ENCODE measurements at regions of chrX and their contacts with region 1.

Region 1: GRCh38 chrX:120514236-120514635 is 45.1 kb upstream of the LAMP2 start:
- DNase-seq: peak; percentile 47
- H3K4me3 Mint-ChIP-seq: no peak overlapping the region
- H3K27ac Mint-ChIP-seq: no peak overlapping the region
- H3K4me1 Mint-ChIP-seq: peaks cover 6% of the 10 kb centered on the region
- H3K27me3 Mint-ChIP-seq: peaks cover 18% of the 10 kb centered on the region
- CTCF ChIP-seq: peak; percentile 40

Region 2: DNA sequence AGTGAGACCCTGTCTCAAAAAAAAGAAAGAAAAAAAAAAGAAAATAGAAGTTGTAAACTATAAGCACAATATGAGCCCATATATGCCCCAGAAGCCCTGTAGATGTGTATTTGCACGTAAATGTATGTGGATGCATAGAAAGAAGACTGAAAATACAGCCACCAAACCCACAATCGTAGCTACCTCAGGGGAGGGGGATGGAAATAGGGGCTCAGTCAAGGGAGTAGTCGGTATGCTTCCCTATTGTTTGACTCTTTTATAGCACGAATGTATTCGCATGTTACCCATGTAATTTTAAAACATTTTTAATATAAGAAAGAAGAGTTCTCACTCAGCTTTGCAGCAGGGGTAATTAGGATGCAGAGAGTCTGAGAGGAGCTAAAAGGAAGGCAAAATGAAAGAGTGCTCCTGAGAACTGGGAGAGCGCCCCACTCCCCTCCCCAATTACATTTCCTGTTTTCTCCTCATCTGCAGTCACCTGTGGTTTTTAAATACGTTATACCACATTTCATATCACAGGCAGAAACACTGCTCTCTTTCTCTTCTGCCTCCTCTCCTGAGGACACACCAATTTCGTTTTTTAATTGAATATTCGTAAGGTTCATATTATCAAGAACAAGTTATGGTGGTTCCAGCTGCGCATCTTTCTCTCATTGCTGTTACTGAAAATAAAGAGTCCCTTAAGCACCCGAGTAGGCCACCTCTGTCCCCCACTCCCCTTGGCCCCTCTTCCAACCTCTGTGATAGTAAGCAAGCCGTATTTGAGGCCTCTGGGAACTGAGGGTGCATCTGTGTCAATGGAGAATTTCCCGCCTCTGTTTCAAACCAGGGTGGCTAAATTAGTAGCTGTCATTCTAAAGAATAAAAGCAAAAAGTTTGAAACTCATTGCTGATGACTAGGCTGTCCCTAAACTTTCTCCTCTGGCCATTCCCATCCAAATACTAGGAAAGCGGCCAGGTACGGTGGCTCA is 831.9 kb before region 1 on chrX:
- CTCF ChIA-PET with region 1: no interaction called
- POLR2A ChIA-PET with region 1: no interaction called
- intact Hi-C with region 1: no loop called
- DNase-seq: no peak
- H3K4me3 Mint-ChIP-seq: no peak overlapping the region
- H3K27ac Mint-ChIP-seq: no peak overlapping the region
- H3K4me1 Mint-ChIP-seq: no peaks in the 10 kb centered on the region
- H3K27me3 Mint-ChIP-seq: no peaks in the 10 kb centered on the region
- CTCF ChIP-seq: no peak

Region 3: DNA sequence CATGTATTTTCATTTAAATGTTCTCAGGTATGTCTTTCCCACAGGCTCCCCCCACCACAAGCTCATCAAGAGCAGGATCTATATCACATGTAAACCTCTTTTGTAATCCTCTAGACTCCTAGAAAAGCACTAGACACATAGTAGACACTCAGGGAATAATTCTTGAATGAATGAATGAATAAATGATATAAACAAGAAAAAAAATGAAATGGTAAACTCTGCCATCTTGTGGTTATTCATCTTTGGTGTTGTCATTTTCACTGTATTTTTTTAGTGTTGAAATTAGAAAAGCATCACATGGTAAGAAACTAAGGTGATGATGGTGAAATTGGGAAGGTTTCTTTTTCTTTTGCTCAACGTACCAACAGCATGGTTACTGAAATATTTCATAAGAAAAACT is 149.8 kb after region 1 on chrX:
- CTCF ChIA-PET with region 1: interaction called, 17 read pairs
- POLR2A ChIA-PET with region 1: no interaction called
- intact Hi-C with region 1: loop called (anchors 1 kb)
- DNase-seq: peak; percentile 62
- H3K4me3 Mint-ChIP-seq: no peak overlapping the region
- H3K27ac Mint-ChIP-seq: peak overlapping the region; percentile 47
- H3K4me1 Mint-ChIP-seq: peaks cover 10% of the 10 kb centered on the region
- H3K27me3 Mint-ChIP-seq: no peaks in the 10 kb centered on the region
- CTCF ChIP-seq: peak; percentile 46

Region 4: GRCh38 chrX:120769576-120770341 is 255.5 kb after region 1 on chrX:
- CTCF ChIA-PET with region 1: interaction called, 10 read pairs
- POLR2A ChIA-PET with region 1: no interaction called
- intact Hi-C with region 1: loop called (anchors 1 kb)
- DNase-seq: peak; percentile 85
- H3K4me3 Mint-ChIP-seq: no peak overlapping the region
- H3K27ac Mint-ChIP-seq: peak overlapping the region; percentile 15
- H3K4me1 Mint-ChIP-seq: peaks cover 7% of the 10 kb centered on the region
- H3K27me3 Mint-ChIP-seq: no peaks in the 10 kb centered on the region
- CTCF ChIP-seq: peak; percentile 32

Measured in MCF 10A (cell line).